Naive thymus-derived CD4-positive, alpha-beta T cell (primary cell): ENCODE measurements at regions of chr12 and their contacts with region 1.

Region 1: GRCh38 chr12:50533203-50533584 is 28.4 kb downstream of the DIP2B start:
- DNase-seq: no peak
- ATAC-seq: peak; percentile 6
- H3K4me3 ChIP-seq: no peak overlapping the region
- H3K4me3 Mint-ChIP-seq: no peak overlapping the region
- H3K27ac ChIP-seq: peak overlapping the region; percentile 50
- H3K27ac Mint-ChIP-seq: no peak overlapping the region
- H3K4me1 ChIP-seq: peaks cover 11 to 46% of the 10 kb centered on the region in 2 donors
- H3K4me1 Mint-ChIP-seq: peaks cover 23 to 39% (median 34%) of the 10 kb centered on the region in 7 donors
- H3K27me3 ChIP-seq: no peaks in the 10 kb centered on the region
- H3K27me3 Mint-ChIP-seq: no peaks in the 10 kb centered on the region

Region 2: GRCh38 chr12:50517456-50518048 is 15.6 kb before region 1 on chr12:
- CTCF ChIA-PET with region 1: interaction called, 4 read pairs
- POLR2A ChIA-PET with region 1: interaction called, 14 read pairs
- intact Hi-C with region 1: loop called (anchors 1 kb)
- DNase-seq: peak in 5 of 9 donors; percentile 19 to 53 (median 36)
- ATAC-seq: peak; percentile 82
- H3K4me3 ChIP-seq: no peak overlapping the region
- H3K4me3 Mint-ChIP-seq: no peak overlapping the region
- H3K27ac ChIP-seq: peak overlapping the region; percentile 65
- H3K27ac Mint-ChIP-seq: no peak overlapping the region
- H3K4me1 ChIP-seq: peaks cover 19 to 81% of the 10 kb centered on the region in 2 donors
- H3K4me1 Mint-ChIP-seq: peaks cover 43 to 65% (median 58%) of the 10 kb centered on the region in 7 donors
- H3K27me3 ChIP-seq: no peaks in the 10 kb centered on the region
- H3K27me3 Mint-ChIP-seq: no peaks in the 10 kb centered on the region

Region 3: DNA sequence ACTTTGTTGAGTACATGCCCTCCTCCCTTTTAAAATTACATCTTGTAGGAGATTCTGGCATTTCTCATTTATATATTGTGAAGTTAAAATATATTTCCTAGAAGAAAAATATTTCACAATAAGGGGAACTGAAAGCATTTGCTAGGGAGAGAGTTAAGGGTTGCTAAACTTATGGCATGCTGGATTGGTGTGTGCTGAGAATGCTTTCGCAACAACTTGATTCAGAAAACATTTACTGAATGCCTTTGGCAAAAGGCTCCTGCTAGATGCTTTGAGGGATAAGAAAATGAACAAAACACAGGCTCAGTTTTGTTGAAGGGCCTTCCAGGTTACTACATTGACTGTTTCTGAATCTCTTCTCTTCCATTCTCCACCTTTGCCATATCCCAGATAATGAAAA is 39.1 kb after region 1 on chr12:
- CTCF ChIA-PET with region 1: no interaction called
- POLR2A ChIA-PET with region 1: no interaction called
- intact Hi-C with region 1: loop called in 1 of 2 experiments (anchors 5 kb)
- DNase-seq: no peak
- ATAC-seq: peak; percentile 34
- H3K4me3 ChIP-seq: no peak overlapping the region
- H3K4me3 Mint-ChIP-seq: no peak overlapping the region
- H3K27ac ChIP-seq: no peak overlapping the region
- H3K27ac Mint-ChIP-seq: peak overlapping the region in 4 of 9 donors; percentile 12 to 81 (median 54)
- H3K4me1 ChIP-seq: peaks cover 0 to 11% of the 10 kb centered on the region in 2 donors
- H3K4me1 Mint-ChIP-seq: peaks cover 29 to 59% (median 48%) of the 10 kb centered on the region in 7 donors
- H3K27me3 ChIP-seq: no peaks in the 10 kb centered on the region
- H3K27me3 Mint-ChIP-seq: no peaks in the 10 kb centered on the region